CD4-positive, alpha-beta memory T cell (primary cell): ENCODE measurements at regions of chr3 and their contacts with region 1.

Region 1: GRCh38 chr3:50192689-50193141 is 1.3 kb downstream of the GNAT1 start:
- DNase-seq: peak; percentile 76 to 84 (median 82)
- H3K4me3 ChIP-seq: no peak overlapping the region
- H3K4me3 Mint-ChIP-seq: peak overlapping the region in 3 of 8 donors; percentile 9 to 70 (median 62)
- H3K27ac ChIP-seq: no peak overlapping the region
- H3K27ac Mint-ChIP-seq: peak overlapping the region in 3 of 7 donors; percentile 52 to 78 (median 60)
- H3K4me1 ChIP-seq: peaks cover 24% of the 10 kb centered on the region
- H3K4me1 Mint-ChIP-seq: peaks cover 5 to 18% (median 13%) of the 10 kb centered on the region in 4 donors
- H3K27me3 ChIP-seq: peaks cover 11% of the 10 kb centered on the region
- H3K27me3 Mint-ChIP-seq: peaks cover 4 to 15% of the 10 kb centered on the region in 2 donors

Region 2: DNA sequence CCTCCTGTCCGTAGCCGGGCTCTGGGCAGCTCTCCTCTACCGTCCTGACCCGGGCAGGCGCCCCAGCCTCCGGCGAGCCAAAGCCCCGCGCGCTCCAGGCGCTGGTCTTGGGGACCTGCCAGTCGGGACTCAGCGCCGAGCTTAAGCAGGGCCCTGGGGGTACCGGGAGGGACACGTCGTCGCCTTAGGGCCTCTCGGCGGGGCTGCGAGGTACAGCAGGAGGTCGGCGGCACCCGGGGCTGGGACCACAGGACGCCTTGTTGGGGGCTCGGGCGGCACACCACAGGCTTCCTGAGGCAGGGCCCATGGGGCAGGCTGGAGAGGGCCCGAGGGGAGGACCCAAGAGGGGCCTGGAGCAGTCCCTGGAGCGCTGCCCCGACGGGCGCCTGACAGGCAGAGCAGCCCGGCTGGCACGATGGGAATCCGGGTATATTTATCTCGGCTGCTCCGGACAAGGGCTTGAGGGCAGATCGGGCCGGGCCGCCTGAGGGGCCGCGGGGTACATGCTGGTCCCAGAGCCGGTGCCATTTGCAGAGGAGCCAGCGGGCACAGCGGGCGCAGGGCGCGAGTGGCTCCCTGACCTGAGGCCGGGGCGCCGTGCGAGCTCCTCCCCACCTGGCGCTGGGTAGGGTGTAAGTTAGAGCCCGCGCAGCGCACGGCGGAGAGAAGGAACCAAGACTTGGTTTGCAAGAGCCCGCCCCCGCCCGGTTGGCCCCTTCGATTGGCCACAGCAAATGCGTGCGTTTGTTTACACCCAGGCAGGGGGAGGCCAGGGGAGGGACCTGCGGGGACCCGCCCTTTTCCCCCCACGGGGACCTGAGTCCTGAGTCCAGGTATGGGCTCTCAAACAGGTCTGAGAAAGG is 12.9 kb after region 1 on chr3:
- CTCF ChIA-PET with region 1: interaction called, 23 read pairs
- POLR2A ChIA-PET with region 1: interaction called, 4 read pairs
- intact Hi-C with region 1: no loop called
- DNase-seq: peak in 3 of 5 donors; percentile 16 to 59 (median 21)
- H3K4me3 ChIP-seq: no peak overlapping the region
- H3K4me3 Mint-ChIP-seq: peak overlapping the region in 5 of 8 donors; percentile 9 to 41 (median 21)
- H3K27ac ChIP-seq: no peak overlapping the region
- H3K27ac Mint-ChIP-seq: no peak overlapping the region
- H3K4me1 ChIP-seq: peaks cover 13% of the 10 kb centered on the region
- H3K4me1 Mint-ChIP-seq: peaks cover 0 to 4% (median under 1%) of the 10 kb centered on the region in 4 donors
- H3K27me3 ChIP-seq: peaks cover 23% of the 10 kb centered on the region
- H3K27me3 Mint-ChIP-seq: peaks cover 34 to 35% of the 10 kb centered on the region in 2 donors

Region 3: GRCh38 chr3:50221411-50222168 is 28.9 kb after region 1 on chr3:
- CTCF ChIA-PET with region 1: interaction called, 218 read pairs
- POLR2A ChIA-PET with region 1: interaction called, 47 read pairs
- intact Hi-C with region 1: loop called (anchors 1 kb)
- DNase-seq: no peak
- H3K4me3 ChIP-seq: no peak overlapping the region
- H3K4me3 Mint-ChIP-seq: no peak overlapping the region
- H3K27ac ChIP-seq: no peak overlapping the region
- H3K27ac Mint-ChIP-seq: no peak overlapping the region
- H3K4me1 ChIP-seq: peaks cover 6% of the 10 kb centered on the region
- H3K4me1 Mint-ChIP-seq: peaks cover 4 to 13% (median 9%) of the 10 kb centered on the region in 4 donors
- H3K27me3 ChIP-seq: no peaks in the 10 kb centered on the region
- H3K27me3 Mint-ChIP-seq: peaks cover 0 to 5% of the 10 kb centered on the region in 2 donors

Region 4: GRCh38 chr3:50235716-50236496 is 43.2 kb after region 1 on chr3 and contains the start of gene GNAI2:
- CTCF ChIA-PET with region 1: interaction called, 218 read pairs
- POLR2A ChIA-PET with region 1: interaction called, 3 read pairs
- intact Hi-C with region 1: no loop called
- DNase-seq: peak; percentile 99
- H3K4me3 ChIP-seq: peak within 1 kb of the TSS; percentile 75 to 94
- H3K4me3 Mint-ChIP-seq: peak within 1 kb of the TSS; percentile 96 to 99 (median 98)
- H3K27ac ChIP-seq: peak within 1 kb of the TSS; percentile 76
- H3K27ac Mint-ChIP-seq: peak within 1 kb of the TSS; percentile 91 to 97 (median 94)
- H3K4me1 ChIP-seq: peaks cover 40% of the 10 kb centered on the region
- H3K4me1 Mint-ChIP-seq: peaks cover 20 to 58% (median 35%) of the 10 kb centered on the region in 4 donors
- H3K27me3 ChIP-seq: no peaks in the 10 kb centered on the region
- H3K27me3 Mint-ChIP-seq: no peaks in the 10 kb centered on the region
- total RNA-seq, gene GNAI2: 292 to 300 TPM

Region 5: DNA sequence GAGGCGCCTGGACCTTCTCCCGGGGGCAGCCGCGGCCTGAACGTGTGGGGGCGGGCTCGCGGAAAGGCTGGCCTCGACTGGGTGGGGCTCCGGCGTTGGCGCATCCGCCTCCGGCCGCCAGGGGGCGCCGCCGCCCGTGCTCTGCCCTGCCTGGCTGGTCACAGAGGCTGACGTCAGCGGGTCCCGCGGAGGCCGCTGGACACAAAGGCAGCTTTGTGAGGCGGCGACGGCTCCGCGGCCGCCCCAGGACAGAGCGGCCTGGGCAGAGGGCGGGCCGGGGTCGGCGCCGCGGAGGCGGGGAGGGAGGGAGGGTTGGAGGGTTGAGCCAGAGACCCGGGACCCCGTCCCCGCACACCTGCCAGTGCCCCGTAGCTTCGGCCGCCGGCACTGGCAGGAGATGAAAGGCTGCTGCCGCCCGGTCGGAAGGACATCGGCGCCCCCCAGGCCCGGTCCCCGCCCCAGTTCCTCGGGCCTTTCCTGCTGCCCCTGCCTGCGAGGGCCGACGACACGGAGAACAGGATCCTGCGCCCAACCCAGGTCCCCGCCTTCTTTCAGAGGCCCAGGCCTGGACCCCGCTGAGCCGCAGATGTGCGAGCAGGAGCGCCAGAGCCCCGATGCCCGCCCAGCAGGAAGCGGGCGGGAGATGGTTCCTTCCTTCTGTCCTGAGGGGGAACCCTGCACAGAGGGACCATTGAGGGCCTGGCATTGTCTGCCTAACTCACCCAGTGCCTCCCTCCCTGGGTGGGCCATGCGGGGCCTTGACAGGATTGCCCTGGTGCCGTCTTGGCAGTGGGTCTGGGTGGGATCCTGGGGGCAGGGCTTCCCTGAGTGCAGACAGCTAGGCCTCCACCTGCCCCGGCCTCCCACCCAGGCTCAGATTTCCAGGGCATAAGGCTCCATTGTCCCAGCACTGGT is 67.6 kb after region 1 on chr3:
- CTCF ChIA-PET with region 1: interaction called, 31 read pairs
- POLR2A ChIA-PET with region 1: interaction called, 3 read pairs
- intact Hi-C with region 1: no loop called
- DNase-seq: peak; percentile 76 to 82 (median 79)
- H3K4me3 ChIP-seq: peak overlapping the region in 1 of 2 donors; percentile 24
- H3K4me3 Mint-ChIP-seq: peak overlapping the region; percentile 36 to 83 (median 68)
- H3K27ac ChIP-seq: peak overlapping the region; percentile 46
- H3K27ac Mint-ChIP-seq: peak overlapping the region in 5 of 7 donors; percentile 48 to 91 (median 81)
- H3K4me1 ChIP-seq: peaks cover 13% of the 10 kb centered on the region
- H3K4me1 Mint-ChIP-seq: peaks cover 3 to 9% (median 4%) of the 10 kb centered on the region in 4 donors
- H3K27me3 ChIP-seq: no peaks in the 10 kb centered on the region
- H3K27me3 Mint-ChIP-seq: no peaks in the 10 kb centered on the region

Region 6: DNA sequence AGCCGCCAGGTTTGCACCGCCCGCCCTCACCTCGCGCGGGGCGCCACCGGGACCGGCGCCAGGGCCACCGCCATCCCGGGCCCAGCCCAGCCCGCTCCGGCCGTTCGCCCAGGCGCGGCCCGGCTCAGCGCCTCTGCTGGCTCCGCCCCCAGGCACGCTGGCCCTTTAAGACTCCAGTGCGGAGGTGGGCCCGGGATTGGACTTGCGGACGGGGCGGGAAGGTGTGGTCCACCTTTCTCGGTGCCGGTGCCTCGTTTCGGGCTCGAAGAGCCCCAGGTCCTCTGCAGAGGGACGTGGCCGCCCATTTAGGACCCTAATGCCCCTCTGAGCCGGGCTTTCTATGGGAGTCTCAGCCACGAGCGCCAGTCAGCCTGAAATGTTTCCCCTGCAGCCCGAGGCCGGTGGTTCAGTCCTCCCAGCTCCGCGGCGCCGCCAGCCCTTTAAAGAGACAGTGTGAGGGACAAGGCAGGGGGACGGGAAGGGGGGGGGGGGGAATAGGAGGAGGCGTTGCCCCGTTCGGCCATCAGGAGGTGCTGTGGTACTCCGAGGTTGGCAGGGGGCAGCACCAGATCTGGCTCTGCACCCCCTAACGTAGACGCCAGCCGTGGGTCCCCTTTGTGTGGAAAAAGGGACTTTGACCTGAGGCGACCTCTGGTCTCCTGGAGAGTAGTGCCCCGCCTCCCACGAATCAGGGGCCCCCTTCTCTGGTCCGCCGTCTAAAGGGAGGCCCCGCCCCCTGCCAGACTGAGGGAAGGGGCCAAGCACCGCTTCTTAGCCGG is 128.8 kb after region 1 on chr3:
- CTCF ChIA-PET with region 1: interaction called, 5 read pairs
- POLR2A ChIA-PET with region 1: no interaction called
- intact Hi-C with region 1: loop called (anchors 2 kb)
- DNase-seq: peak; percentile 80 to 88 (median 83)
- H3K4me3 ChIP-seq: peak overlapping the region; percentile 23 to 87
- H3K4me3 Mint-ChIP-seq: peak overlapping the region; percentile 80 to 90 (median 86)
- H3K27ac ChIP-seq: peak overlapping the region; percentile 73
- H3K27ac Mint-ChIP-seq: peak overlapping the region; percentile 90 to 95 (median 93)
- H3K4me1 ChIP-seq: peaks cover 38% of the 10 kb centered on the region
- H3K4me1 Mint-ChIP-seq: peaks cover 18 to 57% (median 38%) of the 10 kb centered on the region in 4 donors
- H3K27me3 ChIP-seq: no peaks in the 10 kb centered on the region
- H3K27me3 Mint-ChIP-seq: no peaks in the 10 kb centered on the region